HepG2 (cell line): ENCODE measurements at regions of chr15 and their contacts with region 1.

Region 1: GRCh38 chr15:58115692-58116091 is 22.5 kb upstream of the AQP9 start:
- DNase-seq: peak; percentile 9
- ATAC-seq: peak; percentile 66
- H3K4me3 ChIP-seq: no peak overlapping the region
- H3K27ac ChIP-seq: no peak overlapping the region
- H3K4me1 ChIP-seq: peaks cover 53% of the 10 kb centered on the region
- H3K27me3 ChIP-seq: no peaks in the 10 kb centered on the region
- CTCF ChIP-seq: peak; percentile 69
- EP300 ChIP-seq: no peak
- POLR2A ChIP-seq: no peak
- RAD21 ChIP-seq: 0 out of 2 replicates have a peak, but pooled peaks have one; percentile 25

Region 2: GRCh38 chr15:56245871-56246814 is 1869.5 kb before region 1 on chr15:
- CTCF ChIA-PET with region 1: no interaction called
- POLR2A ChIA-PET with region 1: no interaction called
- in situ Hi-C with region 1: no loop called
- intact Hi-C with region 1: no loop called
- DNase-seq: peak; percentile 82
- ATAC-seq: peak; percentile 69
- H3K4me3 ChIP-seq: peak overlapping the region; percentile 77 to 84 (median 77)
- H3K27ac ChIP-seq: peak overlapping the region; percentile 98
- H3K4me1 ChIP-seq: peaks cover 17% of the 10 kb centered on the region
- H3K27me3 ChIP-seq: no peaks in the 10 kb centered on the region; a peak in 1 of 5 replicates
- CTCF ChIP-seq: peak; percentile 98
- EP300 ChIP-seq: peak in 1 of 2 experiments; percentile 31; a peak in 1 of 4 replicates
- POLR2A ChIP-seq: peak; percentile 41 to 42; a peak in 2 of 4 replicates
- RAD21 ChIP-seq: peak; percentile 89

Region 3: GRCh38 chr15:57334257-57334656 is 781.4 kb before region 1 on chr15:
- CTCF ChIA-PET with region 1: no interaction called
- POLR2A ChIA-PET with region 1: no interaction called
- in situ Hi-C with region 1: no loop called
- intact Hi-C with region 1: loop called (anchors 5 kb)
- DNase-seq: no peak
- ATAC-seq: no peak
- H3K4me3 ChIP-seq: no peak overlapping the region
- H3K27ac ChIP-seq: no peak overlapping the region
- H3K4me1 ChIP-seq: peaks cover 23% of the 10 kb centered on the region; the same call in 1 of the 2 replicates
- H3K27me3 ChIP-seq: peaks cover 9 to 51% of the 10 kb centered on the region in 2 experiments
- CTCF ChIP-seq: no peak
- EP300 ChIP-seq: no peak
- POLR2A ChIP-seq: no peak
- RAD21 ChIP-seq: no peak

Region 4: DNA sequence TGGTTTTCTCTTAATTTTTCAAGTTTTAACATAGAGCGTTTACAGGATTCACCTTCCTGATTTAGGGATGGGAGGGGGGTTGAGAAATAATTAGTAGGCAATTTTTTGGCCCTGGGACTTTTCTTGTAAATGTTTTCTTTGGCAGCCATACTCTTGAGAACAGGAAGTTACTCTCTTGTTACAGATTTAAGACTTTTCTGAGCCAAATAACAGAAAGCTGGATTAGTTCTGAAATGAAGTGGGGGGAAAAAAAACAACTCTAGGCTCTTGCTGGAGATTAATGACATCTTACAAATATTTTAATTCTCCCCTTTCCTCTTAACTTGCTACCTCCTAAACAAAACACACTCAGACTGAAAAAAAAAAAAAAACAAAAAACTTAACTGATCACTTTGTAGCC is 423.0 kb before region 1 on chr15:
- CTCF ChIA-PET with region 1: no interaction called
- POLR2A ChIA-PET with region 1: no interaction called
- in situ Hi-C with region 1: no loop called
- intact Hi-C with region 1: no loop called
- DNase-seq: no peak
- ATAC-seq: no peak
- H3K4me3 ChIP-seq: no peak overlapping the region
- H3K27ac ChIP-seq: no peak overlapping the region
- H3K4me1 ChIP-seq: no peaks in the 10 kb centered on the region
- H3K27me3 ChIP-seq: peaks cover 0 to 4% of the 10 kb centered on the region in 2 experiments; a peak in 3 of 5 replicates
- CTCF ChIP-seq: no peak
- EP300 ChIP-seq: no peak
- POLR2A ChIP-seq: no peak
- RAD21 ChIP-seq: no peak

Region 5: DNA sequence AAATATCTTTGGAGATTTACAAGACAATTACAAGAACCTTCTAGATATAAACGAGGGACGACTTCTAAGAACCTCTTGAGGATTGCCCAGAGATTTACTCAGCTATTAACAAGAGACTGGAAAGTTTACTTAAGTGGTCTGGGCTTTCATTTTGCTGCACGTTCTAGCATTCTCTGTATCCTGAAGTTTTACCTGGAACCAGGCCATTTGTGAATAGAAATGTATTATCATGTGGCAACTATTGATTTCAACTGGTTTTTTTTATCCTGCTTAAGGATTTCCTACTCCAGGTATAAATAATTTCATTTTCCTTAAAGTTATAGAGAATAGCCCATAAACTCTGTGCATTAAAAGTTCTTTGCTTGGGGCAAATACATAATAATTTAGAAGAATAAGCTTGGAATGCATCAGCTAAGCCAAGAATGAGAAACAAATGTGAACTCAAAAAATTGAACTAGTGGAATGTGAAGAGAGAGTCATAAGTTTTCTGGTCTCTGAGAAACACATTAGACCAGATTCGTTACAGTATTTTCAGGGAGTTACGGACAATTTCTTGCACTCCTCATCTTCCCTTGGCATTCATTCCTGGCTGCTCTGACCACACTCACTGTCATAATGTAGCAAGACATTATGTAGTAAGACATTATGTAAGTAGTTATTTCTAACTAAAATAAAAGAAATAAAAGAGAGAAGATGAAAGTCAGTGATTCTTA is 23.7 kb after region 1 on chr15:
- CTCF ChIA-PET with region 1: no interaction called
- POLR2A ChIA-PET with region 1: no interaction called
- in situ Hi-C with region 1: no loop called
- intact Hi-C with region 1: no loop called
- DNase-seq: no peak
- ATAC-seq: no peak
- H3K4me3 ChIP-seq: no peak overlapping the region
- H3K27ac ChIP-seq: no peak overlapping the region
- H3K4me1 ChIP-seq: no peaks in the 10 kb centered on the region
- H3K27me3 ChIP-seq: peaks cover 2 to 26% of the 10 kb centered on the region in 2 experiments; a peak in 4 of 5 replicates
- CTCF ChIP-seq: no peak
- EP300 ChIP-seq: no peak
- POLR2A ChIP-seq: no peak
- RAD21 ChIP-seq: no peak

Region 6: DNA sequence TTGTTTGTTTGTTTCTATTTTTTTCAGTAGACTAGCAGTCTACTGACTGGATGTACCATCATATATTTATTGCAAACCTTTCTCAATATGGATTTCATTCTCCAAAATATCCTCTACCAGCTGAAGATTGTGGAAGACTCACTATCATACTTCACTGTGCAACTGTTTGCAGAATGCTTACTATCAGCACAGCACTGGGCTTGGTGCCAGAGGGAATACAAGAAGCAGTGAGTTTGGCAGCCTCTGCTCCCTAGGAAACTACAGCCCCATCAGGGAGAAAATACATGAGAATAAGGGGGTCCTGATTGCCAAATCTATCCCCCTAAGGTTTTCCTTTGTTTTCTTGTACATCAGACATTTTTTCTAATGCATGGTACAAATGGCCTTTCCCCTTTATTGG is 50.0 kb after region 1 on chr15:
- CTCF ChIA-PET with region 1: no interaction called
- POLR2A ChIA-PET with region 1: no interaction called
- in situ Hi-C with region 1: no loop called
- intact Hi-C with region 1: loop called (anchors 5 kb)
- DNase-seq: peak; percentile 5
- ATAC-seq: peak; percentile 65; the same call in 1 of the 3 replicates
- H3K4me3 ChIP-seq: no peak overlapping the region
- H3K27ac ChIP-seq: no peak overlapping the region
- H3K4me1 ChIP-seq: peaks cover 38% of the 10 kb centered on the region
- H3K27me3 ChIP-seq: 0 out of 5 replicates have a peak, but pooled peaks cover 0 to 3% of the 10 kb centered on the region in 2 experiments
- CTCF ChIP-seq: no peak
- EP300 ChIP-seq: no peak
- POLR2A ChIP-seq: no peak
- RAD21 ChIP-seq: no peak